CD4-positive, alpha-beta memory T cell (primary cell): ENCODE measurements at regions of chrX and their contacts with region 1.

Region 1: DNA sequence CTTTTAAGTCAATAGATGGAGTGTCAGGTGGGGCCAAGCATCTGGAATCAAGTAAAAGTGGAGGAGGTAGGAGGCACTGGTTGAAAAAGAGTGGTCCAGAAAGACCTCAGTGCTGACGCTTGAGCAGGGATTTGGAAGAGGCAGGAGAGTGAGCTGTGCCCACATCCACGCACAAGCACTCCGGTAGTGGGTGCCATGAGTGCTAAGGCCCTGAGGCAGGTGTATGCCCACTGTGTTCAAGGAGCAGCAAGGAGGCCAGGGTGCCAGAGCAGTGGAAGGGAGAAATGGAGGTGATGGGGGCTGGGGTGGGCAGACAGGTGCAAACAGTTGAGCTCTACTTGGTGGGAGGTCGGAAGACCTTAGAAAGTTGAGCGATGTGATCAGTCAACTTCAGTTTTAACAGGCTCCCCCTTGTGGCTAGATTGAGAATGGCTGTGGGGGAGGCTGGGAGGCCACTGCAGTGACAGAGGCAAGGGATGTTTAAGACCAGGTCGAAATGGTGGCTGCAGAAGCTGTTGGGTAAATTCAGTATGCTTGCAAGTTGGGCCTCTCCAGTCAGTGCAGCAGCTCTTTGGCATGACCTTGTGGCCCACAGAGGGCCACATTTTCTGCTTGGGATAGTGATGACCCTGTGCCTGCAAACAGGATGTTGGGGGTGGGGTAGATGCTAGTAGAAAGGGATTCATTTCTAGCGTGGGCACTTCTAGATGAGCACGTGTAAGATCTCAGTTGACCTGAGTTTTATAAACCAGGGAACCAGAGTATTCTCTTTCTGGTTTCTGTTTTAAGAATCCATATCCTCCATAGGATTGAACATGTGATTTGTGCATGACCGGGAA is 12.7 kb downstream of the TKTL1 start:
- DNase-seq: peak; percentile 75 to 82 (median 78)
- H3K4me3 ChIP-seq: no peak overlapping the region
- H3K4me3 Mint-ChIP-seq: peak overlapping the region in 6 of 8 donors; percentile 3 to 62 (median 22)
- H3K27ac ChIP-seq: no peak overlapping the region
- H3K27ac Mint-ChIP-seq: peak overlapping the region in 6 of 7 donors; percentile 15 to 92 (median 74)
- H3K4me1 ChIP-seq: peaks cover 45% of the 10 kb centered on the region
- H3K4me1 Mint-ChIP-seq: peaks cover 26 to 33% (median 27%) of the 10 kb centered on the region in 4 donors
- H3K27me3 ChIP-seq: no peaks in the 10 kb centered on the region
- H3K27me3 Mint-ChIP-seq: no peaks in the 10 kb centered on the region

Region 2: DNA sequence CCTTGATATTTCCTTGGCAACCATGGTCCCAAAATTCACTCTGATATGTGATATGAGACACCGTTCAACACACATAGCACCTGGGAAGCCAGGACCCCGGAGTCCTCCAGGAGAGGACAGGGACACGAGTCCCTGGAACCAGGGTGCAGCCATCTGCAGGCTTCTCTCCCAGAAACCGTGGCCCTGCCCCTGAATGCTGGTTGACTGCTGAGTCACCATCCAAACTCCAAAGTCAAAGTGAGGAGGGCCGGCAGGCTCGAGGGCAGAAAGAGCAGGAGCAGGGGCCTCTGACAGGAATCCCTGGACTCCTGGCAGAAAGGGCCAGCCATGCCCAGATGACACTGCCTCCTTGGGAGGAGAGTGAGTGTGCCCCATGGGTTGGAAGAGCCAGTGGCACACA is 1242.9 kb before region 1 on chrX:
- CTCF ChIA-PET with region 1: no interaction called
- POLR2A ChIA-PET with region 1: no interaction called
- intact Hi-C with region 1: no loop called
- DNase-seq: no peak
- H3K4me3 ChIP-seq: no peak overlapping the region
- H3K4me3 Mint-ChIP-seq: no peak overlapping the region
- H3K27ac ChIP-seq: no peak overlapping the region
- H3K27ac Mint-ChIP-seq: no peak overlapping the region
- H3K4me1 ChIP-seq: no peaks in the 10 kb centered on the region
- H3K4me1 Mint-ChIP-seq: no peaks in the 10 kb centered on the region
- H3K27me3 ChIP-seq: no peaks in the 10 kb centered on the region
- H3K27me3 Mint-ChIP-seq: no peaks in the 10 kb centered on the region

Region 3: DNA sequence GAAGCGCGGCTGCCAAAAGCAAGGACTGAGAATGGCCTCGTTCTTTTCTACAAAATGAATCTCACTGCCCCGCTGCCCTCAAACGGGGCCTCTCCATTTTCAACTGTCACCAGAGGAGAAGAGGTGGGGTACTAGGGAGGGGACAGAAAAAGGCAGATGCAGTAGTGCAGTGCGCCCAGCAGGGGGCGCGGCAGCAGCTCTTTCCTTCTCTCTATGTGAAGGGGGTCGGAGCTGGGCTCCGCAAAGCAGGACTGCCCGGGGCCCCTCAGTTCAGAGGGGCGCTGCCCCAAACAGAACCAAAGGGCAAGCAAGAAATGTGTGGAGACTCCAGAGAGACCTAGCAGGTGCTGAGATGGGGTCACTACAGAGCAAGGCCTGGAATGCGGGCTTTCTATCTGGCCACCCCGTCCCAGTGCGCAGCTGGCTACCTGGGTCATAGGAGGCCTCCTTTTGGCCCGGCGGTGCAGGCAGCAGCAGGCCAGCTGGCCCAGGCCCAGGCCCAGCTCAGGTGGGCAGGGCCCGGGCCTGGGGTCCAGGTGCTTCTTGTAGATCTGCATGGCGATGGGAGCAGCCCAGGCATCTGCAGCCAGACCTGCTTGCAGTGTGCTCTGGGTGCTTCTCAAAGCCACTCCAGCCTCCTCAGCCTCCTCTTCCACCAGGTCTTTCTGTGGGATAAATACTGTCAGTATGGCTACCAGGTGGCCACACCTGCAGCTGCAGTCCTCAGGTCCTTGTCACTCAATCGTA is 294.5 kb before region 1 on chrX:
- CTCF ChIA-PET with region 1: interaction called, 3 read pairs
- POLR2A ChIA-PET with region 1: no interaction called
- intact Hi-C with region 1: loop called (anchors 1 kb)
- DNase-seq: peak in 4 of 5 donors; percentile 51 to 58 (median 54)
- H3K4me3 ChIP-seq: no peak overlapping the region
- H3K4me3 Mint-ChIP-seq: peak overlapping the region in 1 of 8 donors; percentile 20
- H3K27ac ChIP-seq: no peak overlapping the region
- H3K27ac Mint-ChIP-seq: peak overlapping the region in 6 of 7 donors; percentile 25 to 85 (median 74)
- H3K4me1 ChIP-seq: peaks cover 11% of the 10 kb centered on the region
- H3K4me1 Mint-ChIP-seq: peaks cover 2 to 20% (median 6%) of the 10 kb centered on the region in 4 donors
- H3K27me3 ChIP-seq: no peaks in the 10 kb centered on the region
- H3K27me3 Mint-ChIP-seq: no peaks in the 10 kb centered on the region

Region 4: GRCh38 chrX:154091678-154092077 is 216.6 kb before region 1 on chrX:
- CTCF ChIA-PET with region 1: no interaction called
- POLR2A ChIA-PET with region 1: no interaction called
- intact Hi-C with region 1: loop called (anchors 1 kb)
- DNase-seq: no peak
- H3K4me3 ChIP-seq: no peak overlapping the region
- H3K4me3 Mint-ChIP-seq: peak overlapping the region in 4 of 8 donors; percentile 37 to 61 (median 50)
- H3K27ac ChIP-seq: peak overlapping the region; percentile 34
- H3K27ac Mint-ChIP-seq: peak overlapping the region in 3 of 7 donors; percentile 25 to 72 (median 63)
- H3K4me1 ChIP-seq: peaks cover 68% of the 10 kb centered on the region
- H3K4me1 Mint-ChIP-seq: peaks cover 43 to 73% (median 53%) of the 10 kb centered on the region in 4 donors
- H3K27me3 ChIP-seq: no peaks in the 10 kb centered on the region
- H3K27me3 Mint-ChIP-seq: no peaks in the 10 kb centered on the region

Region 5: DNA sequence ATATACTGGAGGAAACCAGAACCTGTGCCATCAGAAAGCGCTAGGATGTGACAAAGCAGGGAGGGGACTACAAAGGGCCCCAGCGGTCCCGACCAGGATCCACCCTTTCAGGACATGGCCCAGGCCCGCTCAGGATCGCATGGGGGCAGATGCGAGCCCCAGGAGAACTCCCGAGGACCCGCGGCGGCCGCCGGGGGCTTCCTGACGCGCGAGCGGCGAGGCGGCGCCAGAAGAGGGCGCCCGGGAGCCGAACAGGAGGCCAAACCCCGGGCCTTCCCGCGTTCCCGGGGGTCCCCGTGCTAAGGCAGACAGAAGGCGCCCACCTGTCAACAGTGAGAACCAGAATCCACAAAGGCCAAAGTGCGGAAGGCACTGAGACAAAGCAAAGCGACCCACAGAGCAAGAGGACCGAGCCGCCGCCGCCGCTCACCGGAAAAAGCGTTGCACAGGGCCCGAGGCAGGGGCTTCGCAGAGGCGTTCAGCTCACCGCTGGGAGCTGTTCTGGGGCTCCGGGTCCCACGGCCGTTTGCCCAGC is 171.6 kb before region 1 on chrX:
- CTCF ChIA-PET with region 1: interaction called, 43 read pairs
- POLR2A ChIA-PET with region 1: interaction called, 6 read pairs
- intact Hi-C with region 1: loop called (anchors 1 kb)
- DNase-seq: peak; percentile 69 to 76 (median 71)
- H3K4me3 ChIP-seq: peak overlapping the region in 1 of 2 donors; percentile 15
- H3K4me3 Mint-ChIP-seq: peak overlapping the region; percentile 62 to 86 (median 77)
- H3K27ac ChIP-seq: peak overlapping the region; percentile 71
- H3K27ac Mint-ChIP-seq: peak overlapping the region; percentile 80 to 99 (median 96)
- H3K4me1 ChIP-seq: peaks cover 42% of the 10 kb centered on the region
- H3K4me1 Mint-ChIP-seq: peaks cover 6 to 40% (median 16%) of the 10 kb centered on the region in 4 donors
- H3K27me3 ChIP-seq: no peaks in the 10 kb centered on the region
- H3K27me3 Mint-ChIP-seq: no peaks in the 10 kb centered on the region

Region 6: DNA sequence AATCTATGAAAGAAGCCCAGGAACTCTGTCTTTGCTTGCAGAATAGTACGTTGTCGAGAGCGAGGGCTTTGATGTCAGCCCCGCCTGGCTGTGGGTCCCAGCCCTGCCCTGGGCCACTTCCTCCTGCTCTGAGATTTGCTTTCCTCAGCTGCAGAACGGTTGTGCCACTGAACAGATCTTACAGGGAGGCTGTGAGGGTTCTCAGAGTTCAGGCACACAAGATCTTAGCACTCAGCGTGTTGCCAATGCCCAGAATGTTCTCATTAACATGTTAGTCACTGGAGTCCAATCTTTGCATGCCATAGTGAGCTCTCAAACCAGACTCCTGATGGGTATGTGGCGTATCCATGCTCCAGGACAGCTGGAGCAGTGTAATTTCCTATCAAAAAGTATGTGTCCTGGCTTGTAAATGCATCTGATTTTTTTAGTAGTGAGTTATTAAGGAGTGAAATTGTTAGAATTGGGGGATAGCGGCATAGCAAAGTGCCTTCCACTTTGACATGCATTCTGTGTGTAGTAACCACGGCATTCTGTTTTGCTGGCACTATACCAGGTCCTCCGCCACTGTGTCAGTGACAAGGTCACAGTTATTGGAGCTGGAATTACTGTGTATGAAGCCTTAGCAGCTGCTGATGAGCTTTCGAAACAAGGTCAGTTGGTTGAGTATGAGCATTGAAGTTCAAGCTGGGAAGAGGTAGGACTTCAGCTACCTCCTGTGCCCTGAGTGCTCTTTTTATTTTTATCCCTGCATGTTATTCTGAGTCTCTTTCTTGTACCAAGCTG is 18.9 kb after region 1 on chrX:
- CTCF ChIA-PET with region 1: interaction called, 5 read pairs
- POLR2A ChIA-PET with region 1: interaction called, 12 read pairs
- intact Hi-C with region 1: no loop called
- DNase-seq: peak; percentile 60 to 68 (median 63)
- H3K4me3 ChIP-seq: peak overlapping the region; percentile 23 to 37
- H3K4me3 Mint-ChIP-seq: peak overlapping the region; percentile 65 to 87 (median 74)
- H3K27ac ChIP-seq: peak overlapping the region; percentile 26
- H3K27ac Mint-ChIP-seq: peak overlapping the region; percentile 81 to 97 (median 90)
- H3K4me1 ChIP-seq: peaks cover 49% of the 10 kb centered on the region
- H3K4me1 Mint-ChIP-seq: peaks cover 24 to 50% (median 35%) of the 10 kb centered on the region in 4 donors
- H3K27me3 ChIP-seq: no peaks in the 10 kb centered on the region
- H3K27me3 Mint-ChIP-seq: no peaks in the 10 kb centered on the region

Region 7: GRCh38 chrX:154348114-154348531 is 39.8 kb after region 1 on chrX:
- CTCF ChIA-PET with region 1: no interaction called
- POLR2A ChIA-PET with region 1: no interaction called
- intact Hi-C with region 1: no loop called
- DNase-seq: peak in 3 of 5 donors; percentile 22 to 35 (median 25)
- H3K4me3 ChIP-seq: no peak overlapping the region
- H3K4me3 Mint-ChIP-seq: peak overlapping the region; percentile 6 to 72 (median 45)
- H3K27ac ChIP-seq: no peak overlapping the region
- H3K27ac Mint-ChIP-seq: peak overlapping the region; percentile 77 to 99 (median 90)
- H3K4me1 ChIP-seq: peaks cover 59% of the 10 kb centered on the region
- H3K4me1 Mint-ChIP-seq: peaks cover 15 to 58% (median 37%) of the 10 kb centered on the region in 4 donors
- H3K27me3 ChIP-seq: no peaks in the 10 kb centered on the region
- H3K27me3 Mint-ChIP-seq: no peaks in the 10 kb centered on the region

Region 8: DNA sequence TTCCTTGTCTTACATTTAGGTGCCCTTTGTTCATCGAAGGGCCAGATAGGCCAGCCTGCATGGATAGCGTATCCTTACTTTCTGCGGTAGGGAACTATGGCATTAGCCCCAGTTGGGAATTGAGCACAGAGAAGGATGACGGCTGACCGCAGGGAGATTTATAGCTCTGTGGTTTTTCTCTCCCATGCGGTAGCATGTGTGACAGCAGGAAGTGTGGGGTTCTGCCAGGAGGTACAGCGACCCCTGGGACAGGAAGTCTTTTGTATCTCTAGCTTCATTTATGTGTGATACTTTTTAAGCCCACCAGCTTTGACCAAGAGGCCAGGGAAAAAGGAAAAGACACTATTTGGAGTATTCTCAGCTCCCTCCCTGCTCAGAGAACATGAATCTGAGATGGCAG is 409.5 kb after region 1 on chrX:
- CTCF ChIA-PET with region 1: no interaction called
- POLR2A ChIA-PET with region 1: no interaction called
- intact Hi-C with region 1: no loop called
- DNase-seq: peak in 4 of 5 donors; percentile 23 to 44 (median 30)
- H3K4me3 ChIP-seq: no peak overlapping the region
- H3K4me3 Mint-ChIP-seq: peak overlapping the region; percentile 39 to 81 (median 64)
- H3K27ac ChIP-seq: peak overlapping the region; percentile 68
- H3K27ac Mint-ChIP-seq: peak overlapping the region; percentile 78 to 95 (median 90)
- H3K4me1 ChIP-seq: peaks cover 80% of the 10 kb centered on the region
- H3K4me1 Mint-ChIP-seq: peaks cover 47 to 66% (median 54%) of the 10 kb centered on the region in 4 donors
- H3K27me3 ChIP-seq: no peaks in the 10 kb centered on the region
- H3K27me3 Mint-ChIP-seq: no peaks in the 10 kb centered on the region

Region 9: DNA sequence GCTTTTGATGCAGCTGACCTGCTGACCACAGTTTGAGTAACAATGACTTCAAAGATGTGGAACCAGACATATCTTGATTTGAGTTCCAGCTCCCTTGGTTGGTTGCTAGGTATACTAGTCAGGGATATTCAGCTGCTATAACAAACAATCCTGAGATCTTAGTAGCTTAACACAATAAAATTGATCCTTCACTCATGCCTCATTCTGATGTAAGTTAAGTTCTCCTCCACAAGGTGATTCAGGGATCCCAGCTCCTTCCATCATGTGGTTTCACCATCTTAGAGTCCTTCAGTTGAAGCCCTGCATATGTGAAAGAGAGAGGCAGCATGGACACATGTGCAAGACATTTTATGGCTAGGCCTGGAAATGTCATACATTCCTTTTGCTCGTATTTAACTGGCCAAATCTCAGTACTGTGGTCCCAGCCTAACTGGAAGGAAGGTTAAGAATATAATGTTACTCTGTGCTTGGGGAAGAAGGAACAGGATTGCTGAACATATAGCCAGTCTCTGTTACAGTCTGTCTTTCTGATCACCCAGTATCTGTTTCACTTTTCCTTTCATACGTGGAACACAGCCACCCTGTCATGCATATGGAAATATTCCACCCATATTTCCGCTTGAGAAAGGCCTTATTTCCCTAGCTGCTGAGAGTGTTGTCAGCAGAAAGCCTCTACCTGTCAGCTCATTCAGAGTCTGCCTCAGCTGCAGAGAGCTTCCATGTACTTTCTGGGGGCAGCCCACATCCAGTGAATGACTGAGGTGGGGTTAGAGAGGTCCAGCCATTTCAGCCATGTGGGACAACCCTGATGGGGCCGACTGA is 519.1 kb after region 1 on chrX:
- CTCF ChIA-PET with region 1: no interaction called
- POLR2A ChIA-PET with region 1: no interaction called
- intact Hi-C with region 1: no loop called
- DNase-seq: peak; percentile 6 to 52 (median 33)
- H3K4me3 ChIP-seq: no peak overlapping the region
- H3K4me3 Mint-ChIP-seq: peak overlapping the region in 5 of 8 donors; percentile 25 to 62 (median 54)
- H3K27ac ChIP-seq: no peak overlapping the region
- H3K27ac Mint-ChIP-seq: peak overlapping the region; percentile 82 to 91 (median 84)
- H3K4me1 ChIP-seq: peaks cover 9% of the 10 kb centered on the region
- H3K4me1 Mint-ChIP-seq: peaks cover 7 to 17% (median 15%) of the 10 kb centered on the region in 4 donors
- H3K27me3 ChIP-seq: no peaks in the 10 kb centered on the region
- H3K27me3 Mint-ChIP-seq: no peaks in the 10 kb centered on the region